ENCODE measurements at regions of chr12 and their contacts with region 1.

Region 1: GRCh38 chr12:79023261-79023660 is 158.7 kb downstream of the SYT1 start:
- DNase-seq: no peak
- ATAC-seq: no peak
- H3K4me3 ChIP-seq: no peak overlapping the region
- H3K4me3 Mint-ChIP-seq: no peak overlapping the region
- H3K27ac ChIP-seq: no peak overlapping the region
- H3K27ac Mint-ChIP-seq: no peak overlapping the region
- H3K4me1 ChIP-seq: no peaks in the 10 kb centered on the region
- H3K4me1 Mint-ChIP-seq: no peaks in the 10 kb centered on the region
- H3K27me3 ChIP-seq: no peaks in the 10 kb centered on the region
- H3K27me3 Mint-ChIP-seq: no peaks in the 10 kb centered on the region

Region 2: DNA sequence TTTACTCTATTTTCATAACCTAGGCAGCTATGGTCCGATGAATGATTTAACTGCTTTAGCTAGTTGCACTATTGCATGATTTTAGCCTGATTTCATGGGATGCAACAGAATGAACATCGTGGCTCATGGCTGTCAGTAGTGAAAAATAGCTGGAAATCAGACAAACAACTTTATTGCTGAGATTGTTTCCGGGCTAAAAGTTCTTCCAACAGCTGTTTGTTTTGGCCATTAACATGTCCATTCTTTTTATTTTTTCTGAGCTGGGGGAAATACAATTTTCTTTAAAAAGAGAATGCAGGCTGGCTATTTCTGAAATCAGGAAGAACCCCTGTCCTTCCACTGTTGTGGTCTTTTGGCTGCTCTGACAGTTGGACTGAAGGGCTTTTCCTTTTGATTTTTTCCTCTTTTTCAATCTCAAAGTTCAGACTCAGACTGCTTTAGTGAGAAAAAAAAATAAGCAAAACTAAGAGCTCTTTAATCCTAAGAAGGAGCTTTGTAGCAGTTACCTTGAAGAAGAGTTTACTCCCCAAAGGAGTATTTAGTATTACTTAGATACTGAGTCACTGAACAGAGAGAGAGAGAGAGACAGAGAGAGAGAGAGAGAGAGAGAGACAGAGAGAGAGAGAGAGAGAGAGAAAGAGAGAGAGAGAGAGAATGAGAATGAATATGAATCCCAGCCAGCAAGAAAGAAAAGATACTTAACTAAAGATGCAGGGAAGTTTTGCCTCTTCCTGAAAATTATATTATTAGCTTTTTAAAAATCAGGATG is 1192.5 kb before region 1 on chr12 and contains the start of gene NAV3:
- CTCF ChIA-PET with region 1: no interaction called
- POLR2A ChIA-PET with region 1: interaction called in 1 of 2 experiments, 10 read pairs
- DNase-seq: no peak
- ATAC-seq: no peak
- H3K4me3 ChIP-seq: no peak within 1 kb of the TSS
- H3K4me3 Mint-ChIP-seq: no peak within 1 kb of the TSS
- H3K27ac ChIP-seq: no peak within 1 kb of the TSS
- H3K27ac Mint-ChIP-seq: no peak within 1 kb of the TSS
- H3K4me1 ChIP-seq: no peaks in the 10 kb centered on the region
- H3K4me1 Mint-ChIP-seq: no peaks in the 10 kb centered on the region
- H3K27me3 ChIP-seq: no peaks in the 10 kb centered on the region
- H3K27me3 Mint-ChIP-seq: no peaks in the 10 kb centered on the region
- total RNA-seq, gene NAV3: 0.26 TPM in 1 of 5 donors, not detected in the others